ENCODE measurements at regions of chr10 and their contacts with region 1.

Region 1: GRCh38 chr10:96334616-96335526 is 23.9 kb downstream of the OPALIN start:
- DNase-seq: peak; percentile 10
- H3K4me3 ChIP-seq: no peak overlapping the region
- H3K27ac ChIP-seq: no peak overlapping the region
- H3K27me3 ChIP-seq: no peaks in the 10 kb centered on the region
- CTCF ChIP-seq: peak; percentile 83

Region 2: DNA sequence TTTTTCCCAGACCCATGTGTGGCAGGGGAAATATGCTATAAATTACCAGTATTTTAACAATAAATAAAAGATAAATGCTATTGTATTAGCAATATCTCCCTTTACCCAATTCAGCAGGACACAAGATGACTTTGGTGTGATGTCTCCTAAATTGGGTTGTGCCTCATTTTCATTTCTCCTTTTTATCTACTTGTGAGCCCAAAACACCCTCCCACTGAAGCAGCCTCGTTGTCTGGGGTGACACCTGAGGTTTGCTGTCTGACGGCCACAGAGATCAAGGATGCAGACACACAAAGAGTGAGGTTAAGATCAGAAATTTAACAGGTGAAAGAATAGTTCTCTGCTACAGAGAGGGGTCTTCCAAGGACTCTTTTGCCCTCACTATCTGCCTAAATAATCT is 454.2 kb before region 1 on chr10:
- CTCF ChIA-PET with region 1: no interaction called
- POLR2A ChIA-PET with region 1: no interaction called
- DNase-seq: no peak
- H3K4me3 ChIP-seq: no peak overlapping the region
- H3K27ac ChIP-seq: no peak overlapping the region
- H3K27me3 ChIP-seq: no peaks in the 10 kb centered on the region
- CTCF ChIP-seq: no peak

Region 3: GRCh38 chr10:96321822-96322221 is 13.0 kb before region 1 on chr10:
- CTCF ChIA-PET with region 1: interaction called, 15 read pairs
- POLR2A ChIA-PET with region 1: no interaction called
- DNase-seq: no peak
- H3K4me3 ChIP-seq: no peak overlapping the region
- H3K27ac ChIP-seq: no peak overlapping the region
- H3K27me3 ChIP-seq: no peaks in the 10 kb centered on the region
- CTCF ChIP-seq: no peak

Measured in AG04450 (cell line).